Activated B cell treated with CpG ODN at 0.5 μM for 24 hours (primary cell): ENCODE measurements at regions of chr14 and their contacts with region 1.

Region 1: GRCh38 chr14:25803386-25804018 is 753.6 kb upstream of the STXBP6 start:
- DNase-seq: no peak
- ATAC-seq: no peak
- H3K4me3 Mint-ChIP-seq: no peak overlapping the region
- H3K27ac Mint-ChIP-seq: no peak overlapping the region
- H3K4me1 Mint-ChIP-seq: no peaks in the 10 kb centered on the region
- H3K27me3 Mint-ChIP-seq: no peaks in the 10 kb centered on the region
- CTCF ChIP-seq: no peak

Region 2: DNA sequence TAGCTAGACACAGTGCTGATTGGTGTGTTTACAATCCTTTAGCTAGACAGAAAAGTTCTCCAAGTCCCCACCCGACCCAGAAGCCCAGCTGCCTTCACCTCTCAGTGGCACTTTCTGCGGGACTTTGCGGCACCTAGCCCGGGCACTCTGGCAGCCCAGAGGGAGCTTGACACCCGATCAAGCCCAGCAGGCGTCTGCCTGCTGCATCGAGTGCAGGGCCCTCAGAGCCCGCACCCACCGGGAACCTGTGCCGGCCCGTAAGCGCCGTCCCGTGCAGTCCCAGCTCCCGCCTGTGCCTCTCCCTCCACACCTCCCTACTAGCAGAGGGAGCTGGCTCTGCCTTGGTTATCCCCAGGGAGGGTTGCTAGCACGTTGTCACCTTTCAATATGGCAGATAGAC is 122.6 kb before region 1 on chr14:
- CTCF ChIA-PET with region 1: no interaction called
- POLR2A ChIA-PET with region 1: no interaction called
- intact Hi-C with region 1: no loop called
- DNase-seq: no peak
- ATAC-seq: no peak
- H3K4me3 Mint-ChIP-seq: no peak overlapping the region
- H3K27ac Mint-ChIP-seq: no peak overlapping the region
- H3K4me1 Mint-ChIP-seq: no peaks in the 10 kb centered on the region
- H3K27me3 Mint-ChIP-seq: no peaks in the 10 kb centered on the region
- CTCF ChIP-seq: no peak

Region 3: DNA sequence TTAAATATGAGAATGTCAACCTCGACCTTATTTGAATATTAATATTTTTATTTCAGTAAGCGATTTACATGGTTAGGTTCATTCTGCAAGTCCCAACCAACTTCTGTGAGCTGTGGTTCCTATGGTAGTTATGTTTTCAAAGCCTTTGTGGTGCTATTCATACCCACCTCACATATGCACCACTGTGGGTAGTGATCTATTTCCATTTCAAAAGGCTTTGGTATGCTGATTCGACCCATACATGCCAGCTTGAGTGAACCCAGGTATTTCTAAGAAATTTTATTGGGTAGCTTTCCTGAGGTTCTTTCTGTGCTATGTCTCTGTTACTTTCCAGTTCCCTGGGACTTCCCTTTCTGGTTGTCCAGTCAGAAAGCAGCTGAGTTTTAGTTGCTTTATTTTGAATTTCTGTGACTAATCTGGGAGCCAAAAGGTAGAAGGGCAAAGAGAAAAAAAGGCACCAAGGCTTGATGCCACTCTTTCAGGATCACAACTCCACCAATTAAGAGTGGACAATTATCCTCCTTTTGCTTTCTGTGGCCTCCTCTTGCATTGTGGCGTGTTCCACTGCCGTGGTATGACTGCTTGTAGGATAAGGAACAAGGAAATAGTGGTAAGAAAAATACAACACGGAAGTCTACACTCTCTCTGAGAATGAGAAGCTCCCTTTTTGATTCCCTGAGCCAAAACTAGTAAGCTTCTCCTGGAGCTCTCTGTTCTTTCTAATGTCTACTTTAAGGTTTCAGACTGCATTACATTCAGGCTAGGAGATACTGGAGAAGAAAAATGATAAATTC is 65.2 kb after region 1 on chr14:
- CTCF ChIA-PET with region 1: no interaction called
- POLR2A ChIA-PET with region 1: no interaction called
- intact Hi-C with region 1: loop called (anchors 2 kb)
- DNase-seq: no peak
- ATAC-seq: no peak
- H3K4me3 Mint-ChIP-seq: no peak overlapping the region
- H3K27ac Mint-ChIP-seq: no peak overlapping the region
- H3K4me1 Mint-ChIP-seq: no peaks in the 10 kb centered on the region
- H3K27me3 Mint-ChIP-seq: no peaks in the 10 kb centered on the region
- CTCF ChIP-seq: no peak